ENCODE measurements at regions of chr16 and their contacts with region 1.

Region 1: DNA sequence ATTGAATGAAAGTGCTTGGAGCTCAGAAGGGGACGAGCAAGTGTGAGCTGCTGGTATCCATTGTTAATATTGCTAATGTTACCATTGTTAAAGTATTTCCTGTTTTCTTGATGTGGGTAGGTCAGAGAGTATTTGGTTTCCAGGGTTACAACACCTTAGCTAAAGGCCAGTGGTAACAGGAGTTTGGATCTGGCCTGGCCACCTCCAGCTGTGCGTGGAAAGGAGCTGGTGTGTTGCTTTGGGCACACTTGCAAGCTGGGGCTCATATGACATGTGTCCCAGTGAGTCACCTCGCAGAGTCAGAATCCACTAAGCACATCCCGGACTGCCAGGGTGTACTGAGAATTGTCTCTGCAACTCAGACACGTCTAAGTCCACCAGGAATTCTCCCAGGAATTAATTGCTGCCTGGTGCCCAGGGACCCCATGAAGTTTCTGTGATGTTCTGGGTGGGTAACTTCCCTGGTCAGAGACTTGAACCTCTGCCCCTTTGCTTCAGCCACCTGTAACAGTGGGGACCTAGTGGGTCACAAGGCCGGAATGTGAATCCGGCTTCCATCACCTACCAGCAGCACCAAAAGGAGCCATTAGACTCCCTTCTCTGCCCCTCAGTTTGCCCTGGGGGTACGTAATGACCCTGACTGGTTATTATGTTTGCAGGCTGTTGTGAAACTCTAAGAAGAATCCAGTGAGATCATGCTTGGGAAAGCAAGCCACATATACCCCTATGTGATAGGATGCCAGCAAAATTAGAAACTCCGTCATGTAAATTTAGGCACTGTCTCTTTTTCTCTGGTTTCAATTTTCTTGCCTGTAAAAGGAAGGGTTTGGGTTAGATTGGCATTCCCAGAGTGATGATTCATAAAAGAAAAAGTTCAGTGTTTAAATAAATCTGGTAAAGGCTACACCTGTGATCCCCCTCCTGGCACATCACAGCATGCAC is 12.8 kb downstream of the SLC6A2 start:
- DNase-seq: peak in 1 of 2 experiments; percentile 5
- H3K4me3 ChIP-seq: no peak overlapping the region
- H3K27ac ChIP-seq: no peak overlapping the region
- H3K4me1 ChIP-seq: peaks cover 2 to 11% (median 5%) of the 10 kb centered on the region in 4 experiments; a peak in 5 of 7 replicates
- H3K27me3 ChIP-seq: no peaks in the 10 kb centered on the region
- CTCF ChIP-seq: no peak
- EP300 ChIP-seq: no peak
- POLR2A ChIP-seq: no peak
- RAD21 ChIP-seq: no peak

Region 2: DNA sequence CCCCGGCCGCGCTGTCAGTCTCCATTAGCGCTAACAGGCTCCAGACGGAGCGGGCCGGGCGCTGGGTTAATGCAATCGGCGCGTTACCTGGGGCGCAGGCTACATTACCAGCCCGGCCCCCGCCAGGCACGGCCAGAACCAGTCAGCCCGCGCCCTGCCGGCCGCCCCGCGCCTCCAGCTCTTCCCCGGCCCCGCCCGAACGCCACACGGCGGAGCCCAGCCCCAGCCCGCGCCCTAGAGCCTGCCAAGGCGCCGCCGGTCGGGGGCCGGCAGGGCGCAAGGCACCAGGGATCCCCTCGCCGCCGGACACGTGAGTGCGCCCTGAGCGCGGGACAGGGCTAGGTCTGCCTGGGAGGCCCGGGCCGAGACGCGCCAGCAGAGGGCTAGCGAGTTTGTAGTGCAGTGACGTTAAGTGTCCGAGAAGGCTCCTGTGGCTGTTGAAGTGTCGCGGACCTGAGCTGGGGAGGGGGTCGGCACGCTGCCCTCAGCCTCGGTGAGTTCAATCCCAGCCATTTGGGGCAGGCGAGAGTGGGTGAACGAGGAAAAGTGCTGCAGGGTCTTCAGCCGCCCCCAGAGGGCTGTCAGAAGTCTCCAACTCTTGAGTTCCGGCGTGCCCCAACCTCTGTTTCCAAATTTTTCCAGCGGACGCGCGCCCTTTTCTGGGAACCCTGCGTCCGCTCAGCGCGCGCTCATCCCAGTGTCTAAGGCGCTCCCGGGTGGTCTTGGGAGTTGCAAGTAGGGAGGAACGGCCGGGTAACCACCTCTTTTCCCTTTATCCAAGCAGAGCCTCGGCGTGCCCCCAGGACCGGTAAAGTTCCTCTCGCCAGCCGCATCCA is 12.5 kb before region 1 on chr16 and contains the start of gene SLC6A2:
- CTCF ChIA-PET with region 1: interaction called, 13 read pairs
- POLR2A ChIA-PET with region 1: no interaction called
- DNase-seq: peak; percentile 21 to 80
- H3K4me3 ChIP-seq: peak within 1 kb of the TSS; percentile 45 to 76 (median 54)
- H3K27ac ChIP-seq: no peak within 1 kb of the TSS
- H3K4me1 ChIP-seq: peaks cover 0 to 3% (median 1%) of the 10 kb centered on the region in 4 experiments; a peak in 4 of 7 replicates
- H3K27me3 ChIP-seq: peaks cover 38 to 62% (median 51%) of the 10 kb centered on the region in 4 experiments
- CTCF ChIP-seq: peak; percentile 21 to 40 (median 39)
- EP300 ChIP-seq: no peak
- POLR2A ChIP-seq: no peak
- RAD21 ChIP-seq: no peak; a peak in 1 of 4 replicates
- total RNA-seq, gene SLC6A2: 0.40 TPM in 1 of 2 replicates, not detected in the other

Measured in H1 (cell line).